CD8-positive, alpha-beta memory T cell (primary cell): ENCODE measurements at regions of chr15 and their contacts with region 1.

Region 1: DNA sequence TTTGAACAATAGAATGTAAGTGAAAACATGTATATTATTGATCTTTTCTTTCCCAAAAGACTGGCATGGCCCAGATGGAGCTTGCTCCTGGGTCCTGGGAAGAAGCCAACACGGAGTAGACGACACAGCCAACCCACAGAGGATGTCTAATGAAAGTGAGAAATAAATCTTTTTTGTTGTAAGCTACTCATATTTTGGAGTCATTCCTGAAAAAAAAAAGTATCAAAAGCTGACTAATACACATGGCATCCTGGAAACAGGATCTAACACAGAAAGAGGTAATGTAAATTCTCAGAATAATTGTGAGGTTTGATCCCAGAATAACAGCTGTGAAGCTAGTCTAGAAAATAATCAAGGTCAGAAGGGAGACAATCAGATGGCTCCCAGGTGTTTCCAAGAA is 12.6 kb upstream of the FRMD5 start:
- DNase-seq: no peak
- H3K4me3 ChIP-seq: no peak overlapping the region
- H3K4me3 Mint-ChIP-seq: no peak overlapping the region
- H3K27ac ChIP-seq: no peak overlapping the region
- H3K27ac Mint-ChIP-seq: peak overlapping the region in 2 of 8 donors; percentile 6 to 7
- H3K4me1 ChIP-seq: no peaks in the 10 kb centered on the region
- H3K4me1 Mint-ChIP-seq: no peaks in the 10 kb centered on the region
- H3K27me3 ChIP-seq: no peaks in the 10 kb centered on the region
- H3K27me3 Mint-ChIP-seq: peaks cover 9 to 29% of the 10 kb centered on the region in 2 donors

Region 2: DNA sequence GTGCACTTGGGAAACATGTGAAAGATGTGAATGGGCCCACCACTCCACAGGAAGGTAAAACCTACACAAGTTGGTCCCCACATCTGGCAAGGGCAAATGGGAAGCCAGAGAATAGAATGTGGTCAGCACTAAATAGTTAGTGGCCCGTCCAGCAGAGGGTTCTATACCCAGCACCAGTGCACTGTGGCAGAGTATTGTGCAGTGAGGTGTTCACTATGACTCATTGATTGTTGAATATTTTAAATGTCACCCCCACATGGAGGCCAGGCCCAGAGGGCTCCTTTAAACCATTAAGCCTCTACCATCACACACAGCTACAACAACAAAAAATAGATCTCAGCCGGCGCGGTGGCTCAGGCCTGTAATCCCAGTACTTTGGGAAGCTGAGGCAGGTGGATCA is 24.3 kb before region 1 on chr15:
- CTCF ChIA-PET with region 1: no interaction called
- POLR2A ChIA-PET with region 1: no interaction called
- DNase-seq: no peak
- H3K4me3 ChIP-seq: no peak overlapping the region
- H3K4me3 Mint-ChIP-seq: no peak overlapping the region
- H3K27ac ChIP-seq: no peak overlapping the region
- H3K27ac Mint-ChIP-seq: no peak overlapping the region
- H3K4me1 ChIP-seq: no peaks in the 10 kb centered on the region
- H3K4me1 Mint-ChIP-seq: no peaks in the 10 kb centered on the region
- H3K27me3 ChIP-seq: no peaks in the 10 kb centered on the region
- H3K27me3 Mint-ChIP-seq: peaks cover 1 to 20% of the 10 kb centered on the region in 2 donors

Region 3: GRCh38 chr15:44195151-44195740 is 12.4 kb before region 1 on chr15 and contains the start of gene FRMD5:
- CTCF ChIA-PET with region 1: interaction called, 3 read pairs
- POLR2A ChIA-PET with region 1: interaction called, 11 read pairs
- DNase-seq: peak; percentile 63 to 90 (median 80)
- H3K4me3 ChIP-seq: peak within 1 kb of the TSS; percentile 81
- H3K4me3 Mint-ChIP-seq: peak within 1 kb of the TSS; percentile 80 to 92 (median 89)
- H3K27ac ChIP-seq: no peak within 1 kb of the TSS
- H3K27ac Mint-ChIP-seq: peak within 1 kb of the TSS in 5 of 8 donors; percentile 17 to 75 (median 47)
- H3K4me1 ChIP-seq: peaks cover 17% of the 10 kb centered on the region
- H3K4me1 Mint-ChIP-seq: peaks cover 17 to 24% (median 20%) of the 10 kb centered on the region in 3 donors
- H3K27me3 ChIP-seq: peaks cover 41% of the 10 kb centered on the region
- H3K27me3 Mint-ChIP-seq: peaks cover 40 to 80% of the 10 kb centered on the region in 2 donors
- total RNA-seq, gene FRMD5: 0.28 to 0.44 TPM